Spleen (tissue), 13 donors: ENCODE measurements at regions of chr4 and their contacts with region 1.

Region 1: DNA sequence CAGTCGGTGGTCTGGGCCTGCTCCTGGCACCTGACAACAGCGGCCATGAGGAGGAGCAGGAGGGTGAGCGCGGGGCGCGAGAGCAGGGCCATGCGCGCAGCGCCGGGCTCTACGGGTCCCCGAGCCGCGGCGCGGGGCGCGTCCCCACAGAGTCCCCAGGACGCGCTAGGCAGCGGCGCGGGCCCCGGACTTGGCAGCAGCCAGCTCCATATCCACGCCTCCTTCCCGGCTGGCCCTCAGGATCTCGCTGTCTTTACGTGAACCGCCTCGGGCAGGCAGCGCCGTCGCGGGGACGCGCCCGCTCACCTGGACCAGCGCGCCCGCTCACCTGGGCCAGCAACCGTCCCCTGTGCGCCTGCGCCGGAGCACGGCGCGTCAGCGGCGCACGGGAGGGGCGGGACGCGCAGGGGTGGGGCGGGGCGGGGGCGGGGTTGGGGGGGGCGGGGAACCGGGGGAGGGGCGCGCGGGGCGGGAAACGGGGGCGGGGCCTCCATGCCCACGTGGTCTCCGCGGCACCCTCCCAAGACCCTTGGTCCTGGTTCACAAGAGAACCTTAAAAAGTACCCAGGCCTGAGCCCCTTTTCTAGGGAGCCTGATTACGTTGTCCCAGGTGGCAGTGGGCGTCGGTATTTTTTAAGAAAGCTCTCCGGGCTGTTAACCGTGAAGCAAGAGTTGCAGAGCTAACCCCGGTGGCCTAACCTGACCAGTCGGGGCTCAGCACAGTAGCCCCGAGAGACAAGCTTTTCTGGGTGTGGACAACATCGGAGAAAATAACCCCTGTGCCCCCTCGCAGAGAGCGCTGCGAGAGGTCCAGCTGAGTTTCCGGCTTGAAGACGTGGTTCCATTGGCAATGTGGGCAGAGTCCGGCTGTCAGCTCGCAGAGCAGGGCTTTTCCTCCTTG is at the start of gene PLA2G12A:
- DNase-seq: peak; percentile 94
- H3K4me3 ChIP-seq: peak within 1 kb of the TSS; percentile 77 to 95 (median 86)
- H3K27ac ChIP-seq: peak within 1 kb of the TSS; percentile 77 to 91 (median 86)
- H3K4me1 ChIP-seq: peaks cover 7 to 32% (median 22%) of the 10 kb centered on the region in 6 donors
- H3K27me3 ChIP-seq: no peaks in the 10 kb centered on the region
- CTCF ChIP-seq: no peak
- POLR2A ChIP-seq: peak in 2 of 3 donors; percentile 31 to 39
- total RNA-seq, gene PLA2G12A: 13.5 to 21.4 (median 17.1) TPM

Region 2: GRCh38 chr4:109214622-109215301 is 515.2 kb before region 1 on chr4:
- intact Hi-C with region 1: no loop called
- DNase-seq: no peak
- H3K4me3 ChIP-seq: no peak overlapping the region
- H3K27ac ChIP-seq: no peak overlapping the region
- H3K4me1 ChIP-seq: no peaks in the 10 kb centered on the region
- H3K27me3 ChIP-seq: no peaks in the 10 kb centered on the region
- CTCF ChIP-seq: no peak
- POLR2A ChIP-seq: no peak

Region 3: DNA sequence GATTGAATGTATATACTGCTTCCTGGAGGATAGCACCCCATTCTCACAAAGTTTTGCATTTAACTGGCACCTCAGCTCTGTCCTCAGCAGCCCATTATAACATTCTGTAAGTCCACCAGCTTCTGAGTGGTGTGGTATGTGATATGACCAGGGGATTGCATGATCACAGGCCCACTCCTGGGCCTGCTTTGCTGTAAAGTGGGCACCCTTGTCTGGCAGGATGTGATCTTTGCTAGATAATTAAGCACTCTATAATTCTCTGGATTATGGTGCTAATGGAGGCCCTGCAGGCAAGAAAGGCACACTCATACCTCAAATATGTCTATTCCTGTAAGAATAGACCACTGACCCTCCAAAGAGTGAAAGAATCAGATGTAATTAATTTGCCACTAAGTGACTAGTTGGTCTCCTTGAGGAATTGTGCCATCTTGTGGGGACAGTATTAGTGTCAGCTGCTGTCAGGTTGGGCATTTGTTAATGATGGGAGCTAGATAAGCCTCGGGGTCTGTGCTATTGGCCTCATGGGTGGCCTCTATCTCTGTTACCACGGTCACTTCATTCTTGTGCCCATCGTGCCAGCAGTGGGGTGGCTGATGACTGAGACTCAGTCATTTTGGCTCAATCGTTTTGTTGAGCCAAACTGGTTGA is 74.1 kb after region 1 on chr4:
- intact Hi-C with region 1: loop called (anchors 10 kb)
- DNase-seq: no peak
- H3K4me3 ChIP-seq: no peak overlapping the region
- H3K27ac ChIP-seq: no peak overlapping the region
- H3K4me1 ChIP-seq: peaks cover 0 to 21% (median 11%) of the 10 kb centered on the region in 6 donors
- H3K27me3 ChIP-seq: no peaks in the 10 kb centered on the region
- CTCF ChIP-seq: peak in 9 of 11 experiments; percentile 4 to 58 (median 47)
- POLR2A ChIP-seq: no peak